Activated T-helper 1 cell treated with anti-CD3 and anti-CD28 coated beads, Interleukin-12 subunit alpha, Interleukin-12 subunit beta, Interleukin-2, Interleukin-4 antibody, amounts not matched to agents 30 ng/mL and 10 ng/mL and 1 ng/mL, durations not matched to agents 14 hours and 24 hours and 36 hours (primary cell): ENCODE measurements at regions of chr12 and their contacts with region 1.

Region 1: GRCh38 chr12:6851921-6852650 is at the start of gene USP5:
- DNase-seq: peak; percentile 98
- H3K4me3 Mint-ChIP-seq: peak within 1 kb of the TSS; percentile 91
- H3K27ac Mint-ChIP-seq: peak within 1 kb of the TSS; percentile 96
- H3K4me1 Mint-ChIP-seq: peaks cover 46% of the 10 kb centered on the region
- H3K27me3 Mint-ChIP-seq: peaks cover 2% of the 10 kb centered on the region
- total RNA-seq, gene USP5: 116 and 127 TPM in 2 replicates

Region 2: DNA sequence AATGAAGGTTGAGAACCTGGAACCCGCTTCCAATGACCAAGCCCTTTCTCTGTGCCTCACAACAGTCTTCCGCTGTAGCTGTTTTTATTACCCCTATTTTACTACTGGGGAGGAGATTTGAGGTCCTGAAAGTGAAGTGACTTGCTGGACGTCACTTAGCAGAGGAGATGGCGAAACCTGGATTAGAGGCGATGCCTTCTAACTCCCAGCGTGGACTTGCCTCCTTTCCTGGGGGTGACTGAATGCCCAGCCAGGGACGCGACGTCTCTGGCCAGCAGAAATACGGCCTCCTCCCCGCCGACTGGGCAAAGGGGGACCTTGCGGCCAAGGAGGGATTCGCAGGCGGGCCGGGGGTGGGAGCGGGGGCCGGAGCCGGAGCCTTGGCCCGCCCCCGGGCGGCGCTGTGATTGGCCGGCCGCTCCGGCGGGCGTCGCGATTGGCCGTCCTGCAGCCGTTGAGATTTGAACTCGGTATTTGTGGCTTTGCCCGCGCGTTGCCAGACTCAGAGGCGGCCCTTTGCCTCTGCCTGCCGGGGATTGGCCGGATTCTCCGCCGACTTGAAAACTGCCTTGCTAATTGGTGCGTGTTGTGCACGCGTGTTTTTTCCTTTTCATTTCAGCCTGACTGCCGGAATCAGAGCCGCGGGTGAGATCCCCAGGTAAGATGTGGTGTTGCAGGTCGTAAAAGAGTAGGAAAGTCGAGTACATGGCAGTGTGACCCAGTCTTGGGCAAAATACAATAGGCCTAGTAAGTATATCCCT is 358.4 kb before region 1 on chr12 and contains the start of gene NCAPD2:
- intact Hi-C with region 1: loop called (anchors 1 kb)
- DNase-seq: peak; percentile 96
- H3K4me3 Mint-ChIP-seq: peak within 1 kb of the TSS; percentile 97
- H3K27ac Mint-ChIP-seq: peak within 1 kb of the TSS; percentile 97
- H3K4me1 Mint-ChIP-seq: peaks cover 33% of the 10 kb centered on the region
- H3K27me3 Mint-ChIP-seq: peaks cover 3% of the 10 kb centered on the region
- total RNA-seq, gene NCAPD2: 91.6 and 93.4 TPM in 2 replicates

Region 3: DNA sequence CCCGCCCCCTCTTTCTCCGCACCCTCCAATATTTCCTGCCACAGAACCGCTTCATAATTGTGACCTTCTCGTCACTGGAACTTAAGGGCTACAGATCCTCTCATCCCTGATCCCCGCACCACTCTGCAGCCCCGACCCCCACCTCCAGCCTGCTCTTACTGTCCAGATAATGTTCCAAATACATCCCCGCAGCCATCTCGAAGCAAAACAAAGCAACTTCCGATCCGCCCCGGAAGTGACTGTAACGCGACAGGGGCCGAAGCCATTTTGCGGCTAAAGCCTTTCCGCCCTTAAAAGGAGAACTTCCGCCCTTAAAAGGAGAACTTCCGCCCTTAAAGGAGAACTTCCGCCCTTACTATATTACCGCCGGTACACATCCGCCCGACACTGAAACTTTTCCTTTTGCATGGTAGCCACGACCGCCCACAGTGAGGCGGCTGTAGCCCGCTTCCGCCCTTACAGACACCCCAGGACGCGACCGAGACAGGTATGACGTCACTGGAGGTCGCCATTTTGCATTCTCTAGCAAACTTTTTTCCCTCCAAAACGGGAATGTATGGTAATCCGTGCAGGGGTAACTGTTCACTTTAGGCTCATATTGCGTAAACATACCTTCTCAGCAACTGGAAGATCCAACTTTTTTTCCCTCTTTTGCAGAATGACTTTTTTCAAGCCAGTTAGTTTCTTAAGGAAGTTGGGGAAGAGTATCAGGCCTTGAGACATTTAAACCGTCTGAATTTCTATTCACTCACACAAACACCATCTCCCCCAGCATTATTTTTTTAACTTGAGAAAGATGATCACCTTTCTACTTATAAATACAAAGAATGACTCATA is 189.0 kb before region 1 on chr12 and contains the start of gene ING4:
- intact Hi-C with region 1: loop called (anchors 1 kb)
- DNase-seq: peak; percentile 95
- H3K4me3 Mint-ChIP-seq: peak within 1 kb of the TSS; percentile 89
- H3K27ac Mint-ChIP-seq: peak within 1 kb of the TSS; percentile 91
- H3K4me1 Mint-ChIP-seq: peaks cover 30% of the 10 kb centered on the region
- H3K27me3 Mint-ChIP-seq: no peaks in the 10 kb centered on the region
- total RNA-seq, gene ING4: 14.6 and 15.0 TPM in 2 replicates

Region 4: DNA sequence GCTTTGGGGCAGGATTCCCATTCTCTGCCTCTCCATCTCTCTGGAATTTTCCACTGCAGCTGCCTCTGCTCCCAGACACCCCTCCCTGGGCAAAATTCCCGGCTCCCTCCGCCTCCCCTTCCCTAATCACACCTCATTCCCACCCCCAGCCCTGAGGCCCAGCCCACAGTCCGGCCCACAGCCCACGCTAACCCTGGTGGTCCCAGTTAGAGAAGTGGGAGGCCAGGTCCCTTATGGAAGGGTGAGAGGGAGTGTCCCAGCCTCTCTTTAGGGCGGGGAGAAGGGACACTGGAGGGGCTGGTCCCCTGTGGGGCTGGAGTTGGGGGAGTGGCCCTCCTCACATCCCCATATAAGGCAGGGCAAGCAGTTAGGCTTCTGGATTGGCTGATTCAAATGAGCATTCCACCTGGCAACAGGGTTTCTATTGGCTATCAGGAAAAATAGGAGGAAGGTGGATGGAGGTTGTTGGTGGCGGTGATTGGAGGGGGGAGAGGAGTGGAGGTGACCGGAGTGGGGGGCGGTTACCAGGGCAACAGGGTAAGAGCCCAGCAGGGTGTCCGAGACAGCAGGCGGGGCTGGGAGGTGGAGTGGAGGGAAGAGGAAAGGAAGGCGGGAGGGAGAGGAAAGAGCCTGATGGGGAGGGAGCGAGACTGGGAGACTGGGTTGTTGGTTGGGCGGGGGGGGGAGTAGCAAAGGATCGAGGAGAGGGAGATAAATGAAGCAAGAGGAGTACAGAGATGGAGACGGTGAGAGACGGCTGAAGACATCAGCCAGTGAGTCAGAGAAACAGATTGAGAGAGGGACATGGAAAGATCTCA is 87.9 kb before region 1 on chr12:
- intact Hi-C with region 1: loop called (anchors 1 kb)
- DNase-seq: peak; percentile 64
- H3K4me3 Mint-ChIP-seq: peak overlapping the region; percentile 79
- H3K27ac Mint-ChIP-seq: peak overlapping the region; percentile 57
- H3K4me1 Mint-ChIP-seq: peaks cover 43% of the 10 kb centered on the region
- H3K27me3 Mint-ChIP-seq: peaks cover 21% of the 10 kb centered on the region

Region 5: DNA sequence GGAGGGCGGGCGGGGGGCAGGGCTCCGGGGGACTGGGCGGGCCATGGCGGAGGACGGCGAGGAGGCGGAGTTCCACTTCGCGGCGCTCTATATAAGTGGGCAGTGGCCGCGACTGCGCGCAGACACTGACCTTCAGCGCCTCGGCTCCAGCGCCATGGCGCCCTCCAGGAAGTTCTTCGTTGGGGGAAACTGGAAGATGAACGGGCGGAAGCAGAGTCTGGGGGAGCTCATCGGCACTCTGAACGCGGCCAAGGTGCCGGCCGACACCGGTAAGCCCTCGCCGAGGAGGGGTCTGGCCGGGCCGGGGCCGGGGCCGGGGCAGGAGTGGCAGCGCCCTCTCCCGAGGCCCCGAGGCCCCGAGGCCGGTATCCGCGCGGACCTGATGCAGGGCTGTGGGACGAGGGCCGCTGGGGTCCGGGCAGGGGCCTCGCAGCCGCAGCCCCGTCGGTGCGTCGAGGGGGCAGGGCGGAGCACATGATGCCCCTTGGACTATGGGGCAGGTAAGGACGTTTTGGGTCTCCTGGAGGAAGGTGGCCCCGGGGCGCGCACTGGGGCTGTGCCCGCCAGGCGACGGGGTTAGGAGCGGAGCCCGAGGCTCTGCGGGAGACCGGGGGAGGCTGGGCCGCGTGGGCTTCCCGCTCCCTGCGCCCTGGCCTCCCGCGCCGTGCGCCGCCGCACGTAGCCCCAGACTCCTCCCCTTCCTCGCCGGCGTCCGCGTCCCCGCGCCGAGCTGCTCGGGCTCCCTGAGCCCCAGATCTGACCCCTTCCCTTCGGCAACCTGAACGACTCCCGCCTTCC is 15.5 kb after region 1 on chr12 and contains the start of gene TPI1:
- intact Hi-C with region 1: loop called (anchors 1 kb)
- DNase-seq: peak; percentile 75
- H3K4me3 Mint-ChIP-seq: peak within 1 kb of the TSS; percentile 96
- H3K27ac Mint-ChIP-seq: peak within 1 kb of the TSS; percentile 99
- H3K4me1 Mint-ChIP-seq: peaks cover 53% of the 10 kb centered on the region
- H3K27me3 Mint-ChIP-seq: no peaks in the 10 kb centered on the region
- total RNA-seq, gene TPI1: 1,427 and 1,438 TPM in 2 replicates

Region 6: GRCh38 chr12:6934110-6934509 is 82.0 kb after region 1 on chr12:
- intact Hi-C with region 1: no loop called
- DNase-seq: no peak
- H3K4me3 Mint-ChIP-seq: peak overlapping the region; percentile 25
- H3K27ac Mint-ChIP-seq: peak overlapping the region; percentile 98
- H3K4me1 Mint-ChIP-seq: peaks cover 76% of the 10 kb centered on the region
- H3K27me3 Mint-ChIP-seq: no peaks in the 10 kb centered on the region

Region 7: DNA sequence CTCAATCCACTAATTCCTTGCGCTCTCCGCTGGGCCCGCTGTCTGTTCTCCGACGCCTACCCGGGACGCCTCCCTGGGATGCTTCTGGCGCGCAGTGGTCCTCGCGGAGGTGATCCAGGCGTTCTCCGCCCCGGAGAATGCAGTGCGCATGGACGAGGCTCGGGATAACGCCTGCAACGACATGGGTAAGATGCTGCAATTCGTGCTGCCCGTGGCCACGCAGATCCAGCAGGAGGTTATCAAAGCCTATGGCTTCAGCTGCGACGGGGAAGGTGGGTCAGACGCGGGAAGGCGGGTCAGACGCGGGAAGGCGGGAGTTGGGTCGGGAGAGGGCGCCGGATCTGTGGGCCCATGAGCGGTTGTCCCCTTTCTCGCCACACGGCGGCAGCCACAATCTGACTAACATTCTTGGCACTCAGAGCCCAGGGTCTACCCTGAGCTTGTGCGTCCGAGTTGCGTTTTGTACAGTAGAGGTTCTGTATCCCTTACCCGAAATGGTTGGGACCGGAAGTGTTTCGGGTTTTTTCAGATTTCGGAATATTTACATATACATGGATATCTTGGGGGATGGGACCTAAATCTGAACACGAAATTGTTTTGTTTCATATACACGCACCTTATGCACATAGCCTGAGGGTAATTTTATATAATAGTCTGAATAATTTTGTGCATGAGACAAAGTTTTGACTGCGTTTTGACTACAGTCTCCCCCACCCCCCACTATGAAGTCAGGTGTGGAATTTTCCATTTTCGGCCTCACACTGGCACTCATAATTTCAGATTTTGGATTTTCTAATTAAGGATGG is 92.5 kb after region 1 on chr12:
- intact Hi-C with region 1: loop called (anchors 1 kb)
- DNase-seq: peak; percentile 84
- H3K4me3 Mint-ChIP-seq: peak overlapping the region; percentile 96
- H3K27ac Mint-ChIP-seq: peak overlapping the region; percentile 95
- H3K4me1 Mint-ChIP-seq: peaks cover 71% of the 10 kb centered on the region
- H3K27me3 Mint-ChIP-seq: no peaks in the 10 kb centered on the region